ENCODE measurements at regions of chr3 and their contacts with region 1.

Region 1: GRCh38 chr3:71652781-71653413 is 69.4 kb upstream of the FOXP1 start:
- DNase-seq: no peak
- ATAC-seq: peak; percentile 65

Region 2: DNA sequence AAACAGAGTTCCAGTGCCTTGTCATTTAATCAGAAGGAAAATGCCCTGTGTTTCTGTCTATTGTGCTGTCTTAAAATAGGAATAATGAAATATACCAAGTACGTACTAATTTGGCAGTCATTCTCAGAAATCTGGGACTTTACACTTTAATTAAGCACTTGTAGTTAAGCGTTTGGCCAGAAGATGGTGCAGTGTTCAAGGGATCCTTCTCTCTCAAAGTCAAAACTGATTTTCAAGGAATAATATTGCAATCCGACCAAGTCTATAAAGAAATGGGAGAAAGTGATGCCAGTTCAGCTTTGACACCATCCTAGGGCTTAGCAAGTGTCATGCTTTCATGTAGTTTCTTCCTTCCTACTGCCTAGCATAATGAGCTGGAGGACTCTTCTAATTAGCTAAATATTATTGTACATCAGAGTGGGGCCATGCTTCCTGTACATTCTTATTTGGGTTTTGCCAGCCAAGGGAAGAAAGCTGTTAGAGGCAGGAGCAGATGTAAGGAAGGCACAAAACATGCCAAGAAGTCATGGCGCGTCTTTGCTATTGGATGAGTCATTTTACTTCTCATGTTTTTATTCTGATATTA is 1588.6 kb before region 1 on chr3:
- intact Hi-C with region 1: loop called (anchors 10 kb)
- DNase-seq: no peak
- ATAC-seq: peak; percentile 31

Region 3: DNA sequence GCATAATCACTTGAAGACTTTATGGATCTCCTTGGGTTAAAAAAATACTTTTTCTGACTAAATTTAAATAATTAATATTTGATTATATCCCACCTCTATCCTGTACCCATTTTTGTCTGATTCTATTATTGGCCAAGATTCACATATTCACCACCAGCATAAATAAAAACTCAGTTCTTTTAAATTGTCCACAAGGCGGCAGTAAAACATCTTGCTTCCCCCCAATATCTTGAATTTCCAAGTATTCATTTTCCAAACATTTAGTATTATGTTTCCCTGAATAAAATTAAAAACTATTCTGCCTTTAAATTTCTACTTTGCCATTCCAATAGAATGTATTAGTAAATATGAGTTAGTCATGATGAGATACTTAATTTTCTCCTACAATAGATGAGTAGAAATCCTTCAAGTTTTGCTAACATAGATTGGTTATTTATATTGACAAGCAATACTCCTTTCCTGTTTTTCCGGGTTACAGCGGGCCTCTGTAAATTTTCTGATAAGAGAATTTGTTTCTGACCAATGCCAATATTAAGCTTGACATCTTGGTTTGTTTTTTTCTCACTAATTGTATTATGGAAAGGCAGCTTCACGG is 1121.7 kb before region 1 on chr3:
- intact Hi-C with region 1: loop called (anchors 2 kb)
- DNase-seq: no peak
- ATAC-seq: no peak

Region 4: DNA sequence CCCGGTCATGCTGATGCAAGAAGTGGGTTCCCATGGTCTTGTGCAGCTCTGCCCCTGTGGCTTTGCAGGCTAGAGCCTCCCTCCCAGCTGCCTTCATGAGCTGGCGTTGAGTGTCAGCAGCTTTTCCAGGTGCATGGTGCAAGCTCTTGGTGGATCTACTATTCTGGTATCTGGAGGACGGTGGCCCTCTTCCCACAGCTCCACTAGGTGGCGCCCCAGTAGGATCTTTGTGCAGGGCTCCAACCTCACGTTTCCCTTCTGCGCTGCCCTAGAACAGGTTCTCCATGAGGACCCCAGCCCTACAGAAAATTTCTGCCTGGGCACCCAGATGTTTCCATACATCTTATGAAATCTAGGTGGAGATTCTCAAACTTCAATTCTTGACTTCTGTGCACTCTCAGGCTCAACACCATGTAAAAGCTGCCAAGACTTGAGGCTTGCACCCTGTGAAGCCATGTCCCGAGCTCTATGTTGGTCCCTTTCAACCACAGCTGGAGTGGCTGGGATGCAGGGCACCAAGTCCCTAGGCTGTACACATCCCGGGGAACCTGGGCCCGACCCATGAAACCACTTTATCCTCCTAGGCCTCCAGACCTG is 1102.1 kb before region 1 on chr3:
- intact Hi-C with region 1: loop called (anchors 5 kb)
- DNase-seq: peak; percentile 69
- ATAC-seq: peak; percentile 67

Region 5: GRCh38 chr3:70716832-70717231 is 936.1 kb before region 1 on chr3:
- intact Hi-C with region 1: loop called (anchors 2 kb)
- DNase-seq: peak; percentile 43
- ATAC-seq: no peak

Region 6: GRCh38 chr3:71495708-71496472 is 157.0 kb before region 1 on chr3:
- intact Hi-C with region 1: no loop called
- DNase-seq: no peak
- ATAC-seq: no peak